Activated B cell treated with CpG ODN at 0.5 μM for 24 hours (primary cell): ENCODE measurements at regions of chr19 and their contacts with region 1.

Region 1: GRCh38 chr19:17215125-17215971 is at the start of gene USE1:
- DNase-seq: peak; percentile 73
- ATAC-seq: peak; percentile 92
- H3K4me3 Mint-ChIP-seq: peak within 1 kb of the TSS; percentile 91
- H3K27ac Mint-ChIP-seq: peak within 1 kb of the TSS; percentile 96
- H3K4me1 Mint-ChIP-seq: peaks cover 19% of the 10 kb centered on the region
- H3K27me3 Mint-ChIP-seq: no peaks in the 10 kb centered on the region
- CTCF ChIP-seq: no peak
- total RNA-seq, gene USE1: 41.9 and 43.4 TPM in 2 replicates

Region 2: GRCh38 chr19:16764793-16765433 is 450.4 kb before region 1 on chr19:
- CTCF ChIA-PET with region 1: no interaction called
- POLR2A ChIA-PET with region 1: no interaction called
- intact Hi-C with region 1: no loop called
- DNase-seq: no peak
- ATAC-seq: no peak
- H3K4me3 Mint-ChIP-seq: no peak overlapping the region
- H3K27ac Mint-ChIP-seq: no peak overlapping the region
- H3K4me1 Mint-ChIP-seq: peaks cover 19% of the 10 kb centered on the region
- H3K27me3 Mint-ChIP-seq: peaks cover 15% of the 10 kb centered on the region
- CTCF ChIP-seq: no peak

Region 3: GRCh38 chr19:17052439-17053210 is 162.7 kb before region 1 on chr19:
- CTCF ChIA-PET with region 1: no interaction called
- POLR2A ChIA-PET with region 1: no interaction called
- intact Hi-C with region 1: no loop called
- DNase-seq: no peak
- ATAC-seq: peak; percentile 28
- H3K4me3 Mint-ChIP-seq: no peak overlapping the region
- H3K27ac Mint-ChIP-seq: no peak overlapping the region
- H3K4me1 Mint-ChIP-seq: no peaks in the 10 kb centered on the region
- H3K27me3 Mint-ChIP-seq: no peaks in the 10 kb centered on the region
- CTCF ChIP-seq: no peak

Region 4: DNA sequence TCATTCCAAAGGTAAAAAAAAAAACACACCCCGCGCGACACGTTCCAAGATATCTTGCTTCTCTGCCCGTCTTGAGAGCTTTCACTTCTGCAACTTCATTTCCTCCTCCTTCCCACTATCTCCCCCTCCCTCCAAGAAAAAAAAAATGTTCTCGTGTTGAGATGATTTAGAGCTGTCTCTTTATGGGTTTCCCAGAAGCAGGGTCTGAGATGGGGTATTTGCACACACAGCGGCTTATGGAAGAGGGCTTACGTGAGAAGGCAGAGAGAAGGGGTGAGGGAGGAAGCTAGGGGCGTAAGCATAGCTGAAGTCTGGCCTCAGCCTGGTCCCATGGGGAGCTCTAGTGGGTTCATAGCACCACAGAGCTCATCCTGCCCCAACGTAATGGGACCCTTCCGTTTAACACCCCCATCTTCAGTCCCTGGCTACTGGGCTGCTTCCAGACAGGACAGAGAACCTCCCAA is 31.5 kb before region 1 on chr19:
- CTCF ChIA-PET with region 1: no interaction called
- POLR2A ChIA-PET with region 1: interaction called, 25 read pairs
- intact Hi-C with region 1: loop called (anchors 1 kb)
- DNase-seq: peak; percentile 42
- ATAC-seq: peak; percentile 85
- H3K4me3 Mint-ChIP-seq: peak overlapping the region; percentile 79
- H3K27ac Mint-ChIP-seq: peak overlapping the region; percentile 99
- H3K4me1 Mint-ChIP-seq: peaks cover 32% of the 10 kb centered on the region
- H3K27me3 Mint-ChIP-seq: no peaks in the 10 kb centered on the region
- CTCF ChIP-seq: no peak

Region 5: DNA sequence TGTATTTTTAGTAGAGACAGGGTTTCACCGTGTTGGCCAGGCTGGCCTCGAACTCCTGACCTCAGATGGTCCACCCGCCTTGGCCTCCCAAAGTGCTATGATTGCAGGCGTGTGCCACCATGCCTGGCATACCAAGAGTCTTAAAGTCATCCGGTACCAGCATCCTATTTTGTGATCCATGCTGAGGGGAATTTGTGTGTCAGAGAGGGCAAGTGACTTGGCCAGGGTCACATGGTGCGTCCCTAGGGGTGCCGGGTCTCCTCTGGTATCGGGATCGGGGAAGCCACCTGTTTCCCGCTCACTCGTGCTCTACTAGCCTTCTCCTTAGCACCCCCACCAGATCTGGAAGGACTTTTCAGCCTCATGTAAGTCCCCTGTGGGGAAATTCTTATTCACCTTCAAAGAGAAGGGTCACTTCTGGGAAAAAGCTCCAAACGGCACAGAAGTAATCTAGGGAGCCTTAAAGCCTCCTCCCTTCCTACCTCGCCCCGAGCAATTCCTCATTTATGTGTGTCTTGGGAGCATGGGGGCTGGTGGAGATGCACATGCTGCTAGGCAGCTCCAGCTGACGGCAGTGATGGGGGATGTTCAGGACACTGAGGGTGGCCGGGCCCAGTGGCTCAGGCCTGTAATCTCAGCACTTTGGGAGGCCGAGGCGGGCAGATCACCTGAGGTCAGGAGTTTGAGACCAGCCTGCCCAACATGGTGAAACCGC is 60.3 kb after region 1 on chr19:
- CTCF ChIA-PET with region 1: no interaction called
- POLR2A ChIA-PET with region 1: no interaction called
- intact Hi-C with region 1: no loop called
- DNase-seq: no peak
- ATAC-seq: no peak
- H3K4me3 Mint-ChIP-seq: no peak overlapping the region
- H3K27ac Mint-ChIP-seq: no peak overlapping the region
- H3K4me1 Mint-ChIP-seq: no peaks in the 10 kb centered on the region
- H3K27me3 Mint-ChIP-seq: no peaks in the 10 kb centered on the region
- CTCF ChIP-seq: no peak

Region 6: GRCh38 chr19:17336872-17337722 is 121.7 kb after region 1 on chr19 and contains the start of gene GTPBP3:
- CTCF ChIA-PET with region 1: no interaction called
- POLR2A ChIA-PET with region 1: no interaction called
- intact Hi-C with region 1: loop called (anchors 1 kb)
- DNase-seq: peak; percentile 87
- ATAC-seq: peak; percentile 88
- H3K4me3 Mint-ChIP-seq: peak within 1 kb of the TSS; percentile 90
- H3K27ac Mint-ChIP-seq: peak within 1 kb of the TSS; percentile 89
- H3K4me1 Mint-ChIP-seq: peaks cover 36% of the 10 kb centered on the region
- H3K27me3 Mint-ChIP-seq: no peaks in the 10 kb centered on the region
- CTCF ChIP-seq: no peak
- total RNA-seq, gene GTPBP3: 32.4 and 40.2 TPM in 2 replicates

Region 7: DNA sequence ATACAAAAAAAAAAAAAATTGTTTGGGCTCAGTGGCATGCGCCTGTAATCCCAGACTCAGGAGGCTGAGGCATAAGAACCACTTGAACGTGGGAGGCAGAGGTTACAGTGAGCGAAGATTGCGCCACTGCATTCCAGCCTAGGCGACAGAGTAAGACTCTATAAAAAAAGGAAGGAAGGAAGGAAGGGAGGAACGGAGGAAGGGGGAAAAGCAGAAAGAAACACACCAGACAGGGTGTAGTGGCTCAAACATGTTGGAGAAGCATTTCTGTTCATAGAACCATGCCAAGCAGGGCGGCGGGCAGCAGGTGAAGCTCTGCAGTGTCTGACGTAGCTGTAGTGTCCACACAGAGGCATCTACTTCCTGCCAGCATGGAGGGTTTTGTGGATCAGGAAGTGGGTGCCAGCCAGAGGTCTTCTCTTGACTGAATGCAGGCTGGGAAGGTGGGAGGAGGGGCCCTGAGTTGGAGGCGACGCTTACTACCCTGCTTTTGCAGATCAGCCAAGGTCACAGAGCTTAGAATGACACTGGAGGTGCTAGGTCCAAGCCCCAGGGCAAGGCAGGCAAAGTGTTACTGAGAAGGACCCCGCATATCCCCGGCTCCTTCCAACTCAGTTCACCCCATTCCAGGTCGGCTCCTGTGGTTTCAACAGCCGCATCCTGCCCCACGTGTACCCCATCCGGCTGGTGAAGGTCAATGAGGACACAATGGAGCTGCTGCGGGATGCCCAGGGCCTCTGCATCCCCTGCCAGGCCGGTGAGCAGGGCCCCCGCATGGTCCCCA is 284.5 kb after region 1 on chr19:
- CTCF ChIA-PET with region 1: no interaction called
- POLR2A ChIA-PET with region 1: no interaction called
- intact Hi-C with region 1: no loop called
- DNase-seq: no peak
- ATAC-seq: no peak
- H3K4me3 Mint-ChIP-seq: no peak overlapping the region
- H3K27ac Mint-ChIP-seq: no peak overlapping the region
- H3K4me1 Mint-ChIP-seq: peaks cover 32% of the 10 kb centered on the region
- H3K27me3 Mint-ChIP-seq: no peaks in the 10 kb centered on the region
- CTCF ChIP-seq: no peak